HepG2 (cell line): ENCODE measurements at regions of chr17 and their contacts with region 1.

Region 1: DNA sequence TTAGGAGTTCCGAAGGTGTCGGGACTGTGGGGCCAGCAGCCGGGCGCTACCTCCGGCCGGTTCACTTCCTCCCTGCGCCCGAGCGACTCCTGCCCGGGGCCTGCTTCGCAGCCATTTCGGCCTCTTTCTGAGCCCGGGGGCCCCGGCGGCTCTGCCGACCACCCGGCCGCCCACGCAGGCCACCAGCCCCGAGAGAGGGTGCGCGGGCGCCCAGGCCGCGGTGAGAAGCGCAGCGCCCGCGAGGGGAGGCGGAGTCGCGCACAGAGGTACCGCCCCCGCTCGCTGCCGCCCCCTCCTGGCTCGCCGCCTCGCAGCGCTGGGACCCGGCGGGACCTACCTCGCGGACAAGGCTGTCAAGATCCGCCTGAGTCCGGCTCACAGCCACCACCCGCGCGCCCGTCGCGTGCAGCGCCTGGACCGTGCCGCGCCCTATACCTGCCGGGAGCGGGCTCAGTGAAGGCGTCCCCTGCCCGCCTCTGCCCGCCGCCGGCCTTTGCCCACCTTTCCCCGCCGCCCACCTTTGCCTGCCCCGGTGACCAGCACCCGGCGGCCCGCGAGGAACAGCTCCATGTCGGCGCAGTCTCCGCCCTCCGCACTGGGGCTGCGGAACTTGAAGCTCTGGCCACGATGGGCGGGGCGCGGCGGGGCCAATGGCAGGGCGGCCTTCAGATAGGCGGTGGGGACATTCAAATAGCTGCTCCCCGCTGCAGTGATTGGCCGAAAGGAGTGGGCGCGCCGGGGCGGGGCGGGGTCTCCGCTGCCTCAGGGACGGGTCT is at the start of gene DCXR:
- DNase-seq: peak; percentile 97
- ATAC-seq: peak; percentile 89
- H3K4me3 ChIP-seq: peak within 1 kb of the TSS; percentile 87 to 98 (median 93)
- H3K27ac ChIP-seq: peak within 1 kb of the TSS; percentile 91
- H3K4me1 ChIP-seq: peaks cover 57% of the 10 kb centered on the region
- H3K27me3 ChIP-seq: no peaks in the 10 kb centered on the region
- CTCF ChIP-seq: peak; percentile 92
- EP300 ChIP-seq: peak in 1 of 2 experiments; percentile 56; a peak in 1 of 4 replicates
- POLR2A ChIP-seq: peak; percentile 84 to 99
- RAD21 ChIP-seq: peak; percentile 92
- total RNA-seq, gene DCXR: 286 and 311 TPM in 2 replicates

Region 2: GRCh38 chr17:81952792-81953228 is 84.5 kb before region 1 on chr17:
- CTCF ChIA-PET with region 1: no interaction called
- POLR2A ChIA-PET with region 1: interaction called, 20 read pairs
- in situ Hi-C with region 1: no loop called
- intact Hi-C with region 1: no loop called
- DNase-seq: no peak
- ATAC-seq: peak; percentile 11
- H3K4me3 ChIP-seq: no peak overlapping the region
- H3K27ac ChIP-seq: peak overlapping the region; percentile 24
- H3K4me1 ChIP-seq: peaks cover 63% of the 10 kb centered on the region
- H3K27me3 ChIP-seq: no peaks in the 10 kb centered on the region
- CTCF ChIP-seq: no peak
- EP300 ChIP-seq: no peak
- POLR2A ChIP-seq: no peak; a peak in 1 of 4 replicates
- RAD21 ChIP-seq: no peak

Region 3: GRCh38 chr17:81967533-81968395 is 69.5 kb before region 1 on chr17:
- CTCF ChIA-PET with region 1: no interaction called
- POLR2A ChIA-PET with region 1: interaction called, 15 read pairs
- in situ Hi-C with region 1: no loop called
- intact Hi-C with region 1: no loop called
- DNase-seq: peak; percentile 98
- ATAC-seq: peak; percentile 79
- H3K4me3 ChIP-seq: peak overlapping the region; percentile 44 to 74 (median 48)
- H3K27ac ChIP-seq: peak overlapping the region; percentile 75
- H3K4me1 ChIP-seq: peaks cover 70% of the 10 kb centered on the region
- H3K27me3 ChIP-seq: no peaks in the 10 kb centered on the region
- CTCF ChIP-seq: peak; percentile 49
- EP300 ChIP-seq: peak in 1 of 2 experiments; percentile 90; a peak in 3 of 4 replicates
- POLR2A ChIP-seq: peak in 1 of 2 experiments; percentile 41; a peak in 1 of 4 replicates
- RAD21 ChIP-seq: 0 out of 2 replicates have a peak, but pooled peaks have one; percentile 14

Region 4: GRCh38 chr17:82051776-82052637 is 14.7 kb after region 1 on chr17 and contains the starts of genes GPS1 and RFNG:
- CTCF ChIA-PET with region 1: interaction called, 3 read pairs
- POLR2A ChIA-PET with region 1: interaction called, 33 read pairs
- in situ Hi-C with region 1: no loop called
- intact Hi-C with region 1: loop called (anchors 1 kb)
- DNase-seq: peak; percentile 60
- ATAC-seq: peak; percentile 49
- H3K4me3 ChIP-seq: peak within 1 kb of the TSS; percentile 76 to 99 (median 95)
- H3K27ac ChIP-seq: peak within 1 kb of the TSS; percentile 71
- H3K4me1 ChIP-seq: peaks cover 50% of the 10 kb centered on the region
- H3K27me3 ChIP-seq: no peaks in the 10 kb centered on the region; a peak in 2 of 5 replicates
- CTCF ChIP-seq: no peak
- EP300 ChIP-seq: no peak
- POLR2A ChIP-seq: no peak
- RAD21 ChIP-seq: peak; percentile 54; the same call in 1 of the 2 replicates
- total RNA-seq, gene GPS1: 106 and 124 TPM in 2 replicates
- total RNA-seq, gene RFNG: 27.8 and 64.0 TPM in 2 replicates

Region 5: DNA sequence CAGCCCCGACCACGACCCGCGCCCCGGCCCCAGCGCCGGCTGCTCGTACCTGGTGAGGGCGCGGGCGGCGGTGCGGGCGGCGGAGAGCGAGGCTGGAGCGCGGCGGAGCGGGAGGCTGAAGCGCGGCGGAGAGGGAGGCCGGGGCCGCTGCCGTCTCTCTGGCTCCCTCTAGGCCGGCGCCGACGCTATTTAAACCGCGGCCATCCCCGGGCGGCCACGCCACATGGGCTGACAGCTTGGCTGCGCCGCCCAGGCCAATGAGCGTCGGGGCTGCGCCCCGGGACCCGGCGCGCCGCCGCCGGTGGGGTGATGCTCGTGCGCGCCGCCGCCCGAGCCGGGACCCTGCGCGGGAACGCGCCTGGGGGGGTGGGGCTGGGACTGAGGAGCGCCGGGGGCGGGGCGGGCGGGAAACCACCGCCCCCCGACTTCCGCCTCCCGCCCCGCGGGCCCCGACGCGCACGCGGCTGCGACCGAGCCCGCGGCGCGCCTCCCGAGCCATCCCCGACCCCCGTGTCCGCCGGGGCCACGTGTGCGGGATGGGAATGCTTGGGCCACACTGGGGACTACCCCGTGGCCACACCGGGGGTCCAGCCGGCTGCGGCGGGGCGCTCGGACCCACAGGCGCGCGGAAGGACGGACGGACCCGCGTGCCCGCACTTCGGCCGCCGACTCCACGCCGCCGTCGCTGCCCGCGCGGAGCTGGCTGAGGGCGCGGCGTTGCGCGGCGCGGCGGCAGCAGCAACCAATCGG is 60.9 kb after region 1 on chr17 and contains the start of gene FASN:
- CTCF ChIA-PET with region 1: no interaction called
- POLR2A ChIA-PET with region 1: interaction called, 37 read pairs
- in situ Hi-C with region 1: no loop called
- intact Hi-C with region 1: loop called (anchors 2 kb)
- DNase-seq: peak; percentile 91
- ATAC-seq: peak; percentile 41
- H3K4me3 ChIP-seq: peak within 1 kb of the TSS; percentile 72 to 96 (median 86)
- H3K27ac ChIP-seq: peak within 1 kb of the TSS; percentile 93
- H3K4me1 ChIP-seq: peaks cover 76% of the 10 kb centered on the region
- H3K27me3 ChIP-seq: no peaks in the 10 kb centered on the region; a peak in 1 of 5 replicates
- CTCF ChIP-seq: peak; percentile 84
- EP300 ChIP-seq: peak in 1 of 2 experiments; percentile 55; a peak in 2 of 4 replicates
- POLR2A ChIP-seq: peak in 1 of 2 experiments; percentile 96; a peak in 2 of 4 replicates
- RAD21 ChIP-seq: peak; percentile 76
- total RNA-seq, gene FASN: 101 and 192 TPM in 2 replicates

Region 6: GRCh38 chr17:82153745-82154375 is 116.6 kb after region 1 on chr17:
- CTCF ChIA-PET with region 1: no interaction called
- POLR2A ChIA-PET with region 1: interaction called, 3 read pairs
- in situ Hi-C with region 1: loop called (anchors 5 kb)
- intact Hi-C with region 1: loop called (anchors 5 kb)
- DNase-seq: peak; percentile 74
- ATAC-seq: peak; percentile 92
- H3K4me3 ChIP-seq: no peak overlapping the region
- H3K27ac ChIP-seq: no peak overlapping the region
- H3K4me1 ChIP-seq: peaks cover 7% of the 10 kb centered on the region; the same call in 1 of the 2 replicates
- H3K27me3 ChIP-seq: no peaks in the 10 kb centered on the region
- CTCF ChIP-seq: peak; percentile 100
- EP300 ChIP-seq: no peak
- POLR2A ChIP-seq: no peak
- RAD21 ChIP-seq: peak; percentile 99

Region 7: GRCh38 chr17:82247175-82247823 is 210.0 kb after region 1 on chr17:
- CTCF ChIA-PET with region 1: no interaction called
- POLR2A ChIA-PET with region 1: no interaction called
- in situ Hi-C with region 1: no loop called
- intact Hi-C with region 1: no loop called
- DNase-seq: no peak
- ATAC-seq: no peak
- H3K4me3 ChIP-seq: no peak overlapping the region
- H3K27ac ChIP-seq: no peak overlapping the region
- H3K4me1 ChIP-seq: peaks cover 21% of the 10 kb centered on the region
- H3K27me3 ChIP-seq: no peaks in the 10 kb centered on the region
- CTCF ChIP-seq: no peak
- EP300 ChIP-seq: no peak
- POLR2A ChIP-seq: 0 out of 4 replicates have a peak, but pooled peaks of 1 of the 2 experiments have one; percentile 44
- RAD21 ChIP-seq: no peak